ENCODE measurements at regions of chr1 and their contacts with region 1.

Region 1: DNA sequence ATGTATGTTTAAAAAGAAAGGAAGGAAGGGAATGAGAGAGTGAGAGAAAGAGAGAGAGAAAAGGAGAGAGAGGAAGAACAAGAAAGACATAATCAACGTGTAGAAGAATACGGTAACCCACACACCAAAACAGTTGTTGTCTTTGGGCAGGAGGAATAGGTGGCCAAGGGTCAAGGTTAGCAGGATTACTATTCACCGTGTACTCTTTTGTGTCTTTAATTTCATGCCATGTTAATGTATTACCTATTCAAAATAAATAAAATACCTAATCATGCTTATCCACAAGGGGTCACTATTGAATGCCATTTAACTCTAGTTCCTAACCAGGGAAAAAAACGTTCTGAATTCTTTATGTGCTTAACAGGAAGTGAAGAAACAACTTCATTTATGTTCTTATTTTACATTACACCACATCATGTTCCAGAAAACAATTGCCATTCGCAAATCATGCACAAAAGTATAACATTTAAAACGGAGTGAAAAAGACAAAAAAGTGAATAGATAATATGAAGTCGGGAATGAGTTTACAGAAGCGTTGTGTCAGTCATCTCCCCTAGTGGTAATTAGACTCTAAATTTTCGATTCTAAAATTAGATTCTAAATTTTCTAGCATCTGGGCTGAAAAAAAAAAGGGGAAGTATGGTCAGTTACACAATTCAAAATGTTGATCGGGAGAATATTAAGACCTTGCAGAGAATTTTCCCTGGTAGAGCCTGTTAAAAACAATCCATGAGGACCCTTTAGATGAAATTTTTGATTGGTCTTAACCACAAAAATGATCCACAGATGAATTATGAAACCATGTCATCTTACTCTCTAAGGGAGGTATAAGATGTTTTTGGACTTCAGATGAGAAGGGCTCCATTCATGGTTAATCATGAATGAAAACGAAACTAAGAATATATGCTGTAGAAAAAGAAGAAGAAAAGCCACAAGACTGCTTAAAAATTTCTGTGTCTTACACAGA is 700 bp upstream of the KMO start:
- DNase-seq: peak in 4 of 5 donors; percentile 65 to 70 (median 68)
- H3K4me3 ChIP-seq: peak overlapping the region; percentile 45 to 52
- H3K4me3 Mint-ChIP-seq: peak overlapping the region; percentile 91 to 99 (median 98)
- H3K27ac ChIP-seq: peak overlapping the region; percentile 10
- H3K27ac Mint-ChIP-seq: peak overlapping the region in 6 of 7 donors; percentile 1 to 94 (median 90)
- H3K4me1 ChIP-seq: peaks cover 5% of the 10 kb centered on the region
- H3K4me1 Mint-ChIP-seq: peaks cover 5 to 11% (median 9%) of the 10 kb centered on the region in 4 donors
- H3K27me3 ChIP-seq: no peaks in the 10 kb centered on the region
- H3K27me3 Mint-ChIP-seq: peaks cover 0 to 1% of the 10 kb centered on the region in 2 donors

Region 2: GRCh38 chr1:241519308-241520079 is 12.0 kb before region 1 on chr1 and contains the start of gene FH:
- CTCF ChIA-PET with region 1: interaction called, 3 read pairs
- POLR2A ChIA-PET with region 1: interaction called, 3 read pairs
- intact Hi-C with region 1: loop called (anchors 1 kb)
- DNase-seq: peak; percentile 92 to 95 (median 94)
- H3K4me3 ChIP-seq: peak within 1 kb of the TSS; percentile 75 to 76
- H3K4me3 Mint-ChIP-seq: peak within 1 kb of the TSS in 7 of 8 donors; percentile 84 to 93 (median 90)
- H3K27ac ChIP-seq: peak within 1 kb of the TSS; percentile 57
- H3K27ac Mint-ChIP-seq: peak within 1 kb of the TSS; percentile 54 to 95 (median 90)
- H3K4me1 ChIP-seq: peaks cover 17% of the 10 kb centered on the region
- H3K4me1 Mint-ChIP-seq: peaks cover 11 to 32% (median 22%) of the 10 kb centered on the region in 4 donors
- H3K27me3 ChIP-seq: peaks cover 8% of the 10 kb centered on the region
- H3K27me3 Mint-ChIP-seq: peaks cover 16 to 17% of the 10 kb centered on the region in 2 donors
- total RNA-seq, gene FH: 21.0 to 25.9 TPM

Region 3: DNA sequence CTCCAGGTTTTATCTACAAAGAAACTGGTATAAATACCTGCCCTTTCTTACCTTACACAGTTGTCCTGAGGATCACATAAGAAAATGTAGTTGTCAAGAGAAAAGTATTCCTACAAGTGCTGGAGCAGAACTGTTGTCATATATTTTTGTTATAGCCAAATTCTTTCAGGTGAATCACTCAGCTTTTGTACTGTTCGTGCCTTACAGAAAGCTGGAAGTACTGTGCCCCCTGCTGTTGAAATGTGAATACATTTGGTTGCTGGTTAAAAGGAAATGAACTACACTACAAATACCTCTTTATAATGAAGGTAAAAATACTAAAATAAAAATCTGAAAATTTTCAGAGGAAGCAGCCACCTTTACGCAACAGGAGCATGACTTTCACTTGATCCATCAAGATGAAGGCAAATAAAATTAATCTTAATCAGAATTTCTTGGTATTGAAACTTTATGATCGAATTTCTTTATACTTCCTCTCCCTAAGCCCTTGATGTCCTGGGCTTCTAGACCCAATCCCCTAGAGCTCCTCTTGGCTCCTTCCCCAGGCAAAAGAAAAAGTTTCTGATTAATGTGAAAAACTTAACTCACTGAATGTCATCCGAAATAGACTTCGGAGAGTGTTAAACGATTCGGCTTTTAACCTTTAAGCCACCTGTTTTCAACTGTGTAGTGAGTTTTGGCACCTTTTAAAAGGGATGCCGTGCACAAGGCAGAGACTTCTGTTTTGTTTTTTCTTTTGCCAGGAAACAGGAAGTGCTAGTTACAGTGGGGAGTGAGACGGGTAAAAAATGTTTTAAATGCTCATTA is 96.2 kb after region 1 on chr1:
- CTCF ChIA-PET with region 1: interaction called, 10 read pairs
- POLR2A ChIA-PET with region 1: no interaction called
- intact Hi-C with region 1: loop called (anchors 1 kb)
- DNase-seq: peak; percentile 43 to 63 (median 55)
- H3K4me3 ChIP-seq: no peak overlapping the region
- H3K4me3 Mint-ChIP-seq: peak overlapping the region; percentile 30 to 82 (median 72)
- H3K27ac ChIP-seq: peak overlapping the region; percentile 7
- H3K27ac Mint-ChIP-seq: peak overlapping the region; percentile 60 to 88 (median 82)
- H3K4me1 ChIP-seq: peaks cover 7% of the 10 kb centered on the region
- H3K4me1 Mint-ChIP-seq: peaks cover 8 to 12% (median 9%) of the 10 kb centered on the region in 4 donors
- H3K27me3 ChIP-seq: no peaks in the 10 kb centered on the region
- H3K27me3 Mint-ChIP-seq: no peaks in the 10 kb centered on the region

Region 4: GRCh38 chr1:241998412-241998921 is 467.0 kb after region 1 on chr1:
- CTCF ChIA-PET with region 1: interaction called, 6 read pairs
- POLR2A ChIA-PET with region 1: no interaction called
- intact Hi-C with region 1: loop called (anchors 1 kb)
- DNase-seq: peak in 4 of 5 donors; percentile 29 to 47 (median 34)
- H3K4me3 ChIP-seq: no peak overlapping the region
- H3K4me3 Mint-ChIP-seq: peak overlapping the region in 7 of 8 donors; percentile 55 to 80 (median 67)
- H3K27ac ChIP-seq: no peak overlapping the region
- H3K27ac Mint-ChIP-seq: peak overlapping the region in 1 of 7 donors; percentile 66
- H3K4me1 ChIP-seq: no peaks in the 10 kb centered on the region
- H3K4me1 Mint-ChIP-seq: peaks cover 0 to 7% (median 1%) of the 10 kb centered on the region in 4 donors
- H3K27me3 ChIP-seq: no peaks in the 10 kb centered on the region
- H3K27me3 Mint-ChIP-seq: peaks cover 2 to 3% of the 10 kb centered on the region in 2 donors

Region 5: DNA sequence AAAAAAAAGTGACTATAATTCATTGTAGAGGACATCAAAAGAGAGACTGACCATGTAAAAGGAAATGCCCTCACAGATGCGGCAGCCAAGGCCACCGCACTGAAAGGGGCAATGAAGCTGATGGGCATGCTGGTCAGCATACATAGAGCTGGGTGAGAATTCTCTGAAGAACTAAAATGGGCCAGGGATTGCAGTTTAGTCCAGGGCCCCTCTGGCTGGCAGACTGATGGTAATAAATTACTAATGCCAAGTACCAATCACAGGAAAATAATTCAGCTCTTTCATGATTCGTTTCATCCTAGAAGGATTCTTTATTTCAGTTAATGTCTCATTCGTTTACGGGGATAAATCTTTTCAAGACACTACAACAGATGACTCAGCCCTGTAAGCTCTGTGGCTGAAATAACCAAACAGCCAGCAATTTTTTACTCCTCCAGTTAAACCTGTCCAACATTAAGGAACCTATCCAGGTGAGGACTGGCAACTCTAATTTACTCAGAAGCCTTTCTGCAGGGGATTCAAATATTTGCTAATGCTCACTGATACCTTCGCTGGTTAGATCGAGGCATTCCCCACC is 524.4 kb after region 1 on chr1:
- CTCF ChIA-PET with region 1: no interaction called
- POLR2A ChIA-PET with region 1: no interaction called
- intact Hi-C with region 1: no loop called
- DNase-seq: no peak
- H3K4me3 ChIP-seq: no peak overlapping the region
- H3K4me3 Mint-ChIP-seq: no peak overlapping the region
- H3K27ac ChIP-seq: no peak overlapping the region
- H3K27ac Mint-ChIP-seq: no peak overlapping the region
- H3K4me1 ChIP-seq: no peaks in the 10 kb centered on the region
- H3K4me1 Mint-ChIP-seq: no peaks in the 10 kb centered on the region
- H3K27me3 ChIP-seq: no peaks in the 10 kb centered on the region
- H3K27me3 Mint-ChIP-seq: no peaks in the 10 kb centered on the region

Region 6: GRCh38 chr1:243325305-243325890 is 1793.9 kb after region 1 on chr1:
- CTCF ChIA-PET with region 1: no interaction called
- POLR2A ChIA-PET with region 1: no interaction called
- intact Hi-C with region 1: loop called (anchors 1 kb)
- DNase-seq: peak in 4 of 5 donors; percentile 35 to 53 (median 47)
- H3K4me3 ChIP-seq: no peak overlapping the region
- H3K4me3 Mint-ChIP-seq: no peak overlapping the region
- H3K27ac ChIP-seq: no peak overlapping the region
- H3K27ac Mint-ChIP-seq: no peak overlapping the region
- H3K4me1 ChIP-seq: no peaks in the 10 kb centered on the region
- H3K4me1 Mint-ChIP-seq: no peaks in the 10 kb centered on the region
- H3K27me3 ChIP-seq: no peaks in the 10 kb centered on the region
- H3K27me3 Mint-ChIP-seq: no peaks in the 10 kb centered on the region

Measured in CD4-positive, alpha-beta memory T cell (primary cell).